A673 (cell line): ENCODE measurements at regions of chr15 and their contacts with region 1.

Region 1: DNA sequence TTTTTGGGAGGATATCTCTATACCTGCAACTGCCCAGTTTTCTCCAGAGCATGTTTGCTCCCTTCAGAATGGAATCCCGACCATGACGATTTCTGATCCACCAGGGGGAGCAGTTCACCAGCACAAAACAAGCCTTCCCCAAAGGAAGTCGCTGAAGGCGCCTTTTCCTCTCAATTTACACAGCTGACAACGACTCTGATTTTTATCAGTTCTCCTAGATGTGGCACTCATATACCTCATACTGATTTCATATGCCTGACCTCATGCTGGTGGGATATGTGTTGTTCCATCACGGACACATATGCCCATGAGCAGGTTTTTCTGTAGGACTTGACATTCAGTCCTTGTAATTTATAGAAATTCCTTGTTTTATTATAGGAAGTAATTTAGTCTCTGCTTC is 1028.2 kb downstream of the MCTP2 start:
- DNase-seq: peak; percentile 89
- H3K4me3 ChIP-seq: no peak overlapping the region
- H3K27ac ChIP-seq: no peak overlapping the region
- H3K4me1 ChIP-seq: peaks cover 22% of the 10 kb centered on the region
- H3K27me3 ChIP-seq: no peaks in the 10 kb centered on the region
- CTCF ChIP-seq: peak; percentile 73

Region 2: GRCh38 chr15:94670438-94671034 is 589.0 kb before region 1 on chr15:
- CTCF ChIA-PET with region 1: no interaction called
- POLR2A ChIA-PET with region 1: no interaction called
- intact Hi-C with region 1: loop called (anchors 10 kb)
- DNase-seq: peak; percentile 59
- H3K4me3 ChIP-seq: no peak overlapping the region
- H3K27ac ChIP-seq: no peak overlapping the region
- H3K4me1 ChIP-seq: peaks cover 9% of the 10 kb centered on the region
- H3K27me3 ChIP-seq: no peaks in the 10 kb centered on the region
- CTCF ChIP-seq: peak; percentile 80

Region 3: DNA sequence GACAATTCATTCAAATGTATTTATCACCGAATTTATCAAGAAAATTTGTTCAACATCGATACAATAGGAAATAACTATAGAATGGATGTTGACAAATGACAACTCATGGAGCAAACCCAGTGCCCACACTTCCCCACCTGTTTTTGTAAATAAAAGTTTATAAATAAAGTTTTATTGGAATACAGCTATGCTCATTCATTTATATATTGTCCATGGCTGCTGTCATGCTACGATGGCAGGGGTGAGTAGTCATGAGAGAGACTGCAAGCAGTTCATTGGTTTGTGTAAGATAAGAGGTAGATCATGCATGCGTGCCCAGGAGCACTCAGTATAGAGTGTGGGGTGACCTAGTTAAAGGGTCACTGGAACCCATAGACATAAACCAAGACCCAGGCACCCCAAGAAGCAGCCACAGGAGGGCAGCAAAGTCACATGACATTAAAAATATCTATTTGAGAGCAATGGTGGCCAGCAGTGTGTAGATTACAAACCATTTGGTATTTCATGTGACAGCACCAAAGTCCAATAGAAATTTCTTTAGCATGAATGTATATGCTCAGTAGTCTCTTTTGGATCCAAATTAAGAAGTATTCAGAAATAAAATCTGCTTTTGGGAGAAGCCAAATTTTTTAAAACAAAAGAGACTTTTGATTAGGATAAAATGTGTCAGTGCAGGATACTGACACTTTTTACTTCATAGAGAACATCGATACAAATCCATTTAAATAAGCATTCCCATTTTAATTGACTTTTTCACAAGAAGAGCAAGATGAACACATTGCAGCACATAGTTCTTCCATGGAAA is 233.4 kb before region 1 on chr15:
- CTCF ChIA-PET with region 1: no interaction called
- POLR2A ChIA-PET with region 1: no interaction called
- intact Hi-C with region 1: loop called (anchors 5 kb)
- DNase-seq: peak; percentile 71
- H3K4me3 ChIP-seq: no peak overlapping the region
- H3K27ac ChIP-seq: no peak overlapping the region
- H3K4me1 ChIP-seq: no peaks in the 10 kb centered on the region
- H3K27me3 ChIP-seq: no peaks in the 10 kb centered on the region
- CTCF ChIP-seq: peak; percentile 71

Region 4: DNA sequence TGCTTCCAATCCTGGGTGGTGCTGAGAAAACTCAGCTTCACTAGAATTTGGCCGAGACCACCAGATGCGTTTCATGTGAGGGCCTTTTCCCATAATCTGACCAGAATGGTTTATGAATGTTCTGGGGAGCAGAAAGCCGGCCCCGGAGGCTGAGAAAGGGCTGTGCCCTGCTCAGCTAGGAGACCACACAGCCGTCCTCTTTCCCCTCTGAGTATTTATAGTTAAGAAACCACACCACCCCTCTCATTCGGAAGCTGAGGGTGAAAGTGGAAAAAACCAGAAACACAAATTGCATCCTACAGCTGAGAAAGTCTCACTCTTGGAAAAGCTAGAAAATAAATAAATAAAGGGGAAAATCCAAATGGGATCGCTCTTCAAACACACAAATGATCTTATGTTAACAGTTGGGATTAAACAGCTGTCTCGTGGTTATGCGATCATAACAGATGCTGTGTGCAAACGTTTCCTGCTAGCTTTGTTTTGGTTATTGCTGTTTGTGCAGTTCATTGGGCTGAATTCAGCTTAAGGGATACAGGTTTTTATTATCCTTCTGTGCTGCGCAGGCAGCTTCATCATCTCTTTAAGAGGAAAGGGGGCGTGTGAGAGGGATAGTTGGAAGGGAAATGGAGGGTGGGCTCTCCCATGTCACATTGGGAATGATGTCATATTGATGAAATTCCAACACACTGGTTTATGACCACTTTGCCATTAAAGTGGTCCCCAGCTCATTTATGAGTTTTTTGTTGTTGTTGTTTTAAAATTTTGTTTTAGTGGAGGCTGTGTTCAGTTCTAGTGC is 44.8 kb after region 1 on chr15:
- CTCF ChIA-PET with region 1: no interaction called
- POLR2A ChIA-PET with region 1: interaction called, 25 read pairs
- intact Hi-C with region 1: no loop called
- DNase-seq: no peak
- H3K4me3 ChIP-seq: no peak overlapping the region
- H3K27ac ChIP-seq: no peak overlapping the region
- H3K4me1 ChIP-seq: no peaks in the 10 kb centered on the region
- H3K27me3 ChIP-seq: no peaks in the 10 kb centered on the region
- CTCF ChIP-seq: no peak

Region 5: DNA sequence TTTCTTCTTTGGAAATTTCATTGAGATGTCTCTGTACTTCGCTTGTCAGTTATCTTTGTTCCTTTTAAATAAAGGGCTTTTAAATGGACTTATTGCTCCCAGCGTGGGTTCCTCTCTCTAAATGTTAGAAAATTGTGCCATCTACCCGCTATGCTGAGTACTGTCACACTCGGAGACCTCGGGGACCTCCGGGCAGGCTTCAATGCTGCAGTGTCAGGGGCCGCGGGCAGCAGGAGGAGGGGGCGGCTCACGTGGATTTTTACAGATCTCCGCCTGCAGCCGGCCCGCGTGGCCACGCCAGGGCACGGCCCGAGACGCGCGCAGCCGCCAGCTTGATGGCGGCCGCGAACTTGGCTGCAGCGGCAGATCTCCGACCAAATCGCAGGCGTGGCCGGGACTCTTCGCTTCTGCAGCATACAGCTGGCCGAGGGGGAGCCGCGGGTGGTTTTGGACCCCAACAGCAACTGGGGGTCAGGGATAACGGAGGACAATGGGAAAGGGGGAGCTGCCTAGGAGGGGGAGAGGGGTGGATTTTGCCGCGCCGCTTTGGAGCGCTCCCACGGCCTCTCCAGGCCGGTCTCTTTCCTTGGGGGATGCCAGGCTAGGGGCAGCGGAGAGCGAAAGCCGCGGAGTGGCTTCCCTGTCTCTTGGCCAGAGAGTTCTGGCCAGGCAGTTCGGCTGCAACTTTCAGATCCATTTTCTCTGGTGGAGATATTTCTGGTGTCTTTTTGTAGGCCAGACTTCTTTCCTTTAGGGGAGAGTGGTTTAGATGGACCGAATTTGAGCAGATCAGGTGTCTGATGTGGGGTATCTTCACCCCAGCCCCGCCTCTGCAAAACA is 1086.3 kb after region 1 on chr15:
- CTCF ChIA-PET with region 1: no interaction called
- POLR2A ChIA-PET with region 1: no interaction called
- intact Hi-C with region 1: loop called (anchors 5 kb)
- DNase-seq: peak; percentile 88
- H3K4me3 ChIP-seq: peak overlapping the region; percentile 50
- H3K27ac ChIP-seq: peak overlapping the region; percentile 79
- H3K4me1 ChIP-seq: peaks cover 88% of the 10 kb centered on the region
- H3K27me3 ChIP-seq: no peaks in the 10 kb centered on the region
- CTCF ChIP-seq: peak; percentile 79

Region 6: GRCh38 chr15:97072545-97072944 is 1813.0 kb after region 1 on chr15:
- CTCF ChIA-PET with region 1: no interaction called
- POLR2A ChIA-PET with region 1: no interaction called
- intact Hi-C with region 1: loop called (anchors 2 kb)
- DNase-seq: no peak
- H3K4me3 ChIP-seq: no peak overlapping the region
- H3K27ac ChIP-seq: peak overlapping the region; percentile 72
- H3K4me1 ChIP-seq: peaks cover 56% of the 10 kb centered on the region
- H3K27me3 ChIP-seq: no peaks in the 10 kb centered on the region
- CTCF ChIP-seq: no peak

Region 7: DNA sequence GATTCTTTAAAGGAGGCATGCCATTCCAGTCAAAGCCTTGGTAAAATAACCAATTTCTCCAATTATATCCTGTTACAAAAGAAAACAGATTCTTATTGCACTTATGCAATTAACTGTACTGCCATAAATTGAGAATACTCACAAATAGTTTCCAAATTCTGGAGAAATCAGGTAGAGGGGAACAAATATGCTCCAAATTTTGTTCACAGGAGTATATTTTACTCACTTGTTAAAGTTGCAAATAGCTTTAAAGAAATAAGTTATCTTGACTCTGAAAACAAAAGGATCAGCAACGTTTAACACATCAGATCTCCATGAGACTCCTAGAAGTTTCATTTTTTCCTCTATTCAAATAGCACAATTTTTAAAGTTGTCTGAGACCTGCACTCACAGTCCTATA is 1988.9 kb after region 1 on chr15:
- CTCF ChIA-PET with region 1: interaction called, 4 read pairs
- POLR2A ChIA-PET with region 1: no interaction called
- intact Hi-C with region 1: loop called (anchors 5 kb)
- DNase-seq: no peak
- H3K4me3 ChIP-seq: no peak overlapping the region
- H3K27ac ChIP-seq: no peak overlapping the region
- H3K4me1 ChIP-seq: peaks cover 5% of the 10 kb centered on the region
- H3K27me3 ChIP-seq: no peaks in the 10 kb centered on the region
- CTCF ChIP-seq: no peak